Natural killer cell (primary cell): ENCODE measurements at regions of chrX and their contacts with region 1.

Region 1: GRCh38 chrX:41733939-41734338 is 10.0 kb downstream of the GPR82 start:
- DNase-seq: peak; percentile 16 to 18
- ATAC-seq: peak; percentile 69 to 82 (median 74)
- H3K4me3 ChIP-seq: no peak overlapping the region
- H3K4me3 Mint-ChIP-seq: peak overlapping the region; percentile 69
- H3K27ac ChIP-seq: peak overlapping the region; percentile 48
- H3K27ac Mint-ChIP-seq: peak overlapping the region; percentile 79 to 81
- H3K4me1 ChIP-seq: peaks cover 42% of the 10 kb centered on the region
- H3K4me1 Mint-ChIP-seq: peaks cover 32 to 34% of the 10 kb centered on the region in 2 donors
- H3K27me3 ChIP-seq: no peaks in the 10 kb centered on the region
- H3K27me3 Mint-ChIP-seq: peaks cover 15 to 26% of the 10 kb centered on the region in 2 donors
- CTCF ChIP-seq: no peak

Region 2: DNA sequence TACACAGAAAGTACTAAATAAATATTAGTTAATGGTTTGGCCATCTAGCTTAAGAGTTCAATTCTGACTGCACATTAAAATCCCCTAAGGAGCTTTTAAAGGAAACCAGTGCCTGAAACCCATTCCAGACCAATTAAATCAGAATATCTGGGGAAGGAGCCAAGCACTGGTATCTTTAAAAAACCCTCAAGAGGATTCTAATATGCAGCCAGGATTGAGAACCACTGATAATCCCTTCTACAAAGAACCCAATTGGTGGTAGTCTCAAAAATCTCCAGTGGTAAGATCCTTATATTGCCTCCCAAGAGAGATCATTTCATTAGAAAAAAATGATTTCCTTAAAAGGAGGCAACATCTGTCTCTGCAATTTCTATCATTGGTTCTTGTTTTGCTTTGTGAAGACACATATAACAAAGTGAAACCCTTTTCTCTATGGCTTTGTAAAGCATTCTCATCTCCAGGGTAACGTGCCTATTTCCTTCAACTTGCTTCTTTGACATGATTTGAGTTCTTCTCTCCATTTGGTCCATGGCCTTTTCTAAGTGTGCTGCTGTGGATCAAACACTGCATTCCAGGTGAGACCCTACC is 41.7 kb before region 1 on chrX:
- intact Hi-C with region 1: loop called (anchors 5 kb)
- DNase-seq: no peak
- ATAC-seq: peak in 1 of 3 donors; percentile 26
- H3K4me3 ChIP-seq: no peak overlapping the region
- H3K4me3 Mint-ChIP-seq: no peak overlapping the region
- H3K27ac ChIP-seq: no peak overlapping the region
- H3K27ac Mint-ChIP-seq: peak overlapping the region in 1 of 2 donors; percentile 41
- H3K4me1 ChIP-seq: peaks cover 17% of the 10 kb centered on the region
- H3K4me1 Mint-ChIP-seq: peaks cover 36 to 42% of the 10 kb centered on the region in 2 donors
- H3K27me3 ChIP-seq: no peaks in the 10 kb centered on the region
- H3K27me3 Mint-ChIP-seq: peaks cover 2 to 32% of the 10 kb centered on the region in 2 donors
- CTCF ChIP-seq: no peak

Region 3: DNA sequence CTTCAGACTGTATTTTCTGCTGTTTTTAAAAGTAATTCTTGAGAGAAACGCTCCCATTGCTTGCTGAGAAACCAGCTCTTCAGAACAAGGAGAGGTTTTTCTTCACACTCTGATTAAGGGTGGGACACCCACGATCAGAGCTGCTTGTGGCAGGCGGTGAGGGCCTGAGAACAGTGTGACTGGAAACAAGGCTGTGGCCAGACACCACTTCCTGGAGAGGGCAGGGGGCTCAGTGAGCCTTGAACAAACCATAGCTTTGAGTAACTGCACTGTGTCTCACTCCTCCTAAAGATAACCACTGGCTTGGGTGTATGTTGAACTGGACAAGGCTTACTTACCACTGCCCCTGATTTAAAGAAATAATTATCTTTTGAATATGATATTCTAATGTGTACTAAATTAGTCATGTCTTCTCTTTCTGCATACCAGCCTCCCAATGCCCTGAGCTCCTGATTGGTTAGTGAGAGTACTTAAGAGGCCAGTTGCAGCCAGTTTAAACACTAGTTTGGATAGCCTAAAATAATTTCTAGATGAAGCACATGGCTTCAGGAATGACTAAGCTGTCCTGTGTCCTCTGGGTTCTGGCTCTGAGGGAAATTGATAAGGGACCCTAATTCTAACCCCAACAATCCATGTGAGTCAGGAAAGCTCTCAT is 13.7 kb before region 1 on chrX:
- intact Hi-C with region 1: loop called (anchors 1 kb)
- DNase-seq: peak; percentile 53 to 60
- ATAC-seq: peak; percentile 85 to 99 (median 95)
- H3K4me3 ChIP-seq: no peak overlapping the region
- H3K4me3 Mint-ChIP-seq: peak overlapping the region; percentile 64
- H3K27ac ChIP-seq: peak overlapping the region; percentile 61
- H3K27ac Mint-ChIP-seq: peak overlapping the region; percentile 63 to 78
- H3K4me1 ChIP-seq: peaks cover 42% of the 10 kb centered on the region
- H3K4me1 Mint-ChIP-seq: peaks cover 41 to 55% of the 10 kb centered on the region in 2 donors
- H3K27me3 ChIP-seq: no peaks in the 10 kb centered on the region
- H3K27me3 Mint-ChIP-seq: peaks cover 9 to 25% of the 10 kb centered on the region in 2 donors
- CTCF ChIP-seq: no peak